HEK293 (cell line): ENCODE measurements at regions of chr11 and their contacts with region 1.

Region 1: GRCh38 chr11:123020968-123021367 is 39.3 kb upstream of the BSX start:
- H3K4me3 ChIP-seq: no peak overlapping the region
- H3K27ac ChIP-seq: no peak overlapping the region
- H3K4me1 ChIP-seq: no peaks in the 10 kb centered on the region
- CTCF ChIP-seq: no peak

Region 2: DNA sequence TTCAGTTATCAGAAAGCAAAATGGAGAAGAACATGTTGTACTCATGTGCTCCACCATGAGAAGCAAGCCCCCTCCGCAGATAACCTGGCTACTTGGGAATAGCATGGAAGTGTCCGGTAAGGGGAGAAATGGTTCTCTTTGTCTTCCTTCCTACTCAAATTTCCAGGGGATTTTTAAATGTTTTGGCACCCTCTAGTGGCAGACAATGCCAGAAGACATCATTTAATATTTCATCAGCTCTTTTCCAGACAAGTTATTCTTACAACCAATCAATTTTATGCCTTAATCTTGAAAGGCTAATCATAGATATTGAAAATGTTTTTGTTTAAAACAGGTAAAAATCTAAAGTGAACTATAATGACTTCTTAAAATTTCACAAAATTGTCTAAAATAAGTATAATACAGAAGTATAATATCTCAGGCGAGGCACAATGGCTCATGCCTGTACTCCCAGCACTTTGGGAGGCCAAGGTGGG is 167.0 kb before region 1 on chr11:
- CTCF ChIA-PET with region 1: interaction called, 273 read pairs
- POLR2A ChIA-PET with region 1: no interaction called
- H3K4me3 ChIP-seq: no peak overlapping the region
- H3K27ac ChIP-seq: no peak overlapping the region
- H3K4me1 ChIP-seq: 0 out of 2 replicates have a peak, but pooled peaks cover 3% of the 10 kb centered on the region
- CTCF ChIP-seq: peak; percentile 27; the same call in 1 of the 2 replicates

Region 3: DNA sequence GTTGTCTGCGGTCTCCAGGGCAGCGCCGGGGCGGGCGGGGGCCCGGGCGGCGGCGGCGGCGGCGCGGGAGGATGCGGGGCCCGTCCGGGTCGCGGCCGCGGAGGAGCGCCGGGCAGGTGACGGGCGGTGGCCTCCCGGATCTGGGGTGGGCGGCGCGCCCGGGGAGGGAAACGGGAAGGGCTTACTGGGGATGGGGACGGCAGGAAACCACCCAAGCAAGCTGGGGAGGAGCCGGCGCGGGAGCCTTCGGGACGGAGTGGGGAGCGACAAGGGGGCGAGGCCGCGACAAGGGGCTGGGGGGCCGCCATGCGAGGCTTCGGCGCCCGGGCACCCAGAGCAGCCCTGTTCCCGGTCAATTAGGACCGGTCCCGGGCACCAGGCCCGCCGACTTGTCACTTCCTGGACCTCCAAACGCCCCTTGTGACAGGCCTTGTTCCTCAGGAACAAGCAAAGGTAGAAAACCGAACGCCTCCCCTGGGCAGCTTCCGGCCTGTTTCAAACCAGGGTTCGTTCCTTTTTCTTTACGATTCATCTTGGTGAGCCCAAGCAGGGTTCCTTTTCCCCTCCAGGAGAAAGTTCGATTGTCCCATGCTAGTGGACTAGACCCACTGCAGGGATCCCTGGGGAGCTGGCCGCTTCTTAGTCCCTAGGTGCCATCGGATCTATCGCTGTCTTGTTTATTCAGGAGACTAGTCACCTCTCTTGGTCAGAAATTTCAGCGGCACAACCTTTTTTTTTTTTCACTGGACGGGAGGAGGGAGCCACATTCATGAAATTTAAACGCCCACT is 137.9 kb before region 1 on chr11:
- CTCF ChIA-PET with region 1: interaction called, 13 read pairs
- POLR2A ChIA-PET with region 1: interaction called, 3 read pairs
- H3K4me3 ChIP-seq: peak overlapping the region; percentile 70
- H3K27ac ChIP-seq: peak overlapping the region; percentile 93
- H3K4me1 ChIP-seq: no peaks in the 10 kb centered on the region
- CTCF ChIP-seq: 0 out of 2 replicates have a peak, but pooled peaks have one; percentile 10

Region 4: GRCh38 chr11:123006860-123007542 is 14.0 kb before region 1 on chr11:
- CTCF ChIA-PET with region 1: interaction called, 21 read pairs
- POLR2A ChIA-PET with region 1: no interaction called
- H3K4me3 ChIP-seq: no peak overlapping the region
- H3K27ac ChIP-seq: no peak overlapping the region
- H3K4me1 ChIP-seq: no peaks in the 10 kb centered on the region
- CTCF ChIP-seq: no peak

Region 5: GRCh38 chr11:123039605-123040432 is 18.9 kb after region 1 on chr11:
- CTCF ChIA-PET with region 1: interaction called, 37 read pairs
- POLR2A ChIA-PET with region 1: no interaction called
- H3K4me3 ChIP-seq: no peak overlapping the region
- H3K27ac ChIP-seq: no peak overlapping the region
- H3K4me1 ChIP-seq: no peaks in the 10 kb centered on the region
- CTCF ChIP-seq: no peak